ENCODE measurements at regions of chr18 and their contacts with region 1.

Region 1: DNA sequence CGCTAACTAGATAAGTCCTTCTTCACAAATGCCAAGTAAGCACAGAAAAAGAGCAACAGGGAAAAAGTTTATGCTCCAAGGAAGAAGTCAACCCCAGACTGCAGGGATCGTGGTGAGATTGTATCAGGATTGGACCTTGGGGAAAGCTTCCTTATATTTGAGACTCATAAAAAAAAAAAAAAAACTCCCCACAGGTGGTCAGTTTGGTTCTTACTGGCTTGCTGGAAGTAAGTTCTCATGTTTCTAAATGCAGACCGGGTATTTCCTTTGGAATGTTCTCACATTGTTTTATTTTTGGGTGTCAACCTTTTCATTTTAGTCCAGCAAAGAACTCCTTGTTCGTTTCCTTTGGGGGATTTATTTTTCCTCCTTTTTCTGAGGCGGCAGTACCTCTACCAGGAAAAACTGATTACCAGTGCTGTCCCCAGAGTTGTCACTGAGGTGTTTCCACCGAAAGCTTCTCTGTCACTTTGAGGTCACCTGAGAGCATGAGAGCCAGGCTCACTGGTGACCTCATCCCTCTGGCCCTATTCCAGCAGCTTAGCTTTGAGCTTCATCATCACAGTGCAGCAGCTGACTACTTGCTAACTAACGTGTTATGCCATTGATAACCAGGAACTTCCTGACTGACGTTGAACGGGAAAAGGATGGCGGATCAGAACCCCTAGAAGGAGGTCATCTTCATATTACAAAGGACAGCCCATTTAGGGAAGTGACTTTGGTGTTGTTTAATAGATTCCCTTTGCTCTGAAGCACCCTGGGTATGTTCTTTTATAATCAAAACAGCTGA is 16.8 kb upstream of the ATP8B1 start:
- DNase-seq: peak; percentile 74 to 96
- H3K4me3 ChIP-seq: peak overlapping the region; percentile 23; the same call in 1 of the 2 replicates
- H3K27ac ChIP-seq: peak overlapping the region; percentile 72
- H3K4me1 ChIP-seq: peaks cover 21% of the 10 kb centered on the region
- H3K27me3 ChIP-seq: no peaks in the 10 kb centered on the region
- CTCF ChIP-seq: no peak

Region 2: GRCh38 chr18:57780706-57781347 is 39.0 kb before region 1 on chr18:
- CTCF ChIA-PET with region 1: no interaction called
- POLR2A ChIA-PET with region 1: no interaction called
- intact Hi-C with region 1: no loop called
- DNase-seq: peak; percentile 33 to 86
- H3K4me3 ChIP-seq: peak overlapping the region; percentile 37; the same call in 1 of the 2 replicates
- H3K27ac ChIP-seq: peak overlapping the region; percentile 97
- H3K4me1 ChIP-seq: peaks cover 89% of the 10 kb centered on the region
- H3K27me3 ChIP-seq: no peaks in the 10 kb centered on the region
- CTCF ChIP-seq: no peak

Region 3: GRCh38 chr18:57846258-57846657 is 26.4 kb after region 1 on chr18:
- CTCF ChIA-PET with region 1: no interaction called
- POLR2A ChIA-PET with region 1: interaction called, 14 read pairs
- intact Hi-C with region 1: no loop called
- DNase-seq: peak; percentile 56 to 94
- H3K4me3 ChIP-seq: no peak overlapping the region
- H3K27ac ChIP-seq: peak overlapping the region; percentile 67
- H3K4me1 ChIP-seq: peaks cover 32% of the 10 kb centered on the region
- H3K27me3 ChIP-seq: no peaks in the 10 kb centered on the region
- CTCF ChIP-seq: no peak

Region 4: DNA sequence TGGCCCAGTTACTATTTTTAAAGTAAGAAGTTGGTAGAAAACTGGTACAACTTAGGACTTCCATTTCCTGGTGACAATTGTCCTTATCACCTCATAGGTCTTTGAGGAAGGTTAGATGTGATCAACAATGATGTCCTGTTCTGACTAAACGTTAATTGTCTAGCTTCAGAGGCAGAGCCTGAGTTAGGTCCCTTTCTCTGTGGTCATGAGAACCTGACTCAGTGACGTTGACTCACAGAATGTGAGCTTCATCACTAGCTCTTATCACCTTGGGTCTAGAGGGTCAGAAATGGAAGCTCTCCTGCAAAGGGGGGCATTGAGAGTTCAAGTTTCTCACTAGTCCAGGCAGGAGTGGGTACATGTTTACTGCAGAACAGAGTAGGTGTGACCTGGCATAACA is 43.8 kb after region 1 on chr18:
- CTCF ChIA-PET with region 1: no interaction called
- POLR2A ChIA-PET with region 1: no interaction called
- intact Hi-C with region 1: no loop called
- DNase-seq: no peak
- H3K4me3 ChIP-seq: no peak overlapping the region
- H3K27ac ChIP-seq: no peak overlapping the region
- H3K4me1 ChIP-seq: no peaks in the 10 kb centered on the region
- H3K27me3 ChIP-seq: no peaks in the 10 kb centered on the region
- CTCF ChIP-seq: no peak

Region 5: DNA sequence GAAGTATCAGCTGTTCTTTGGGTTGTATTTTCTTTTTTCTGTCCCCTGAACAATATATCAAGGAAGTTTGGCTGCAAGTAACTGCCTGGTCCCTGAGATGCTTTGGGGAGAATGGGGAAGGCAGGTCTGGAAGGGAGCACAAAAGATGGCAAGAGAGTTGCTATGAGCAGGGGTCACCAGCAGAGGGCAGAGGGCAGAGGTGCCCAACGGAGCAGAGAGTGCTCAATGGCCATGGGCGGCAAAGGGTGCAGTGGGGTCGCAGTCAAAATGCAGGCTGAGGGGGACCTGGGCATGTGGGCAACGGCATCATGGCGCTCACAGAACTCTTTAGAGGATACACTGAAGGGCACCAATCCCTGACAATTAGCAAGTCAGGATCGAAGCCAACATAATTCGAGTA is 91.0 kb after region 1 on chr18:
- CTCF ChIA-PET with region 1: no interaction called
- POLR2A ChIA-PET with region 1: no interaction called
- intact Hi-C with region 1: no loop called
- DNase-seq: no peak
- H3K4me3 ChIP-seq: no peak overlapping the region
- H3K27ac ChIP-seq: no peak overlapping the region
- H3K4me1 ChIP-seq: no peaks in the 10 kb centered on the region
- H3K27me3 ChIP-seq: no peaks in the 10 kb centered on the region
- CTCF ChIP-seq: peak; percentile 64

Measured in PC-9 (cell line).